Activated B cell treated with CpG ODN at 0.5 μM for 24 hours (primary cell): ENCODE measurements at regions of chrX and their contacts with region 1.

Region 1: DNA sequence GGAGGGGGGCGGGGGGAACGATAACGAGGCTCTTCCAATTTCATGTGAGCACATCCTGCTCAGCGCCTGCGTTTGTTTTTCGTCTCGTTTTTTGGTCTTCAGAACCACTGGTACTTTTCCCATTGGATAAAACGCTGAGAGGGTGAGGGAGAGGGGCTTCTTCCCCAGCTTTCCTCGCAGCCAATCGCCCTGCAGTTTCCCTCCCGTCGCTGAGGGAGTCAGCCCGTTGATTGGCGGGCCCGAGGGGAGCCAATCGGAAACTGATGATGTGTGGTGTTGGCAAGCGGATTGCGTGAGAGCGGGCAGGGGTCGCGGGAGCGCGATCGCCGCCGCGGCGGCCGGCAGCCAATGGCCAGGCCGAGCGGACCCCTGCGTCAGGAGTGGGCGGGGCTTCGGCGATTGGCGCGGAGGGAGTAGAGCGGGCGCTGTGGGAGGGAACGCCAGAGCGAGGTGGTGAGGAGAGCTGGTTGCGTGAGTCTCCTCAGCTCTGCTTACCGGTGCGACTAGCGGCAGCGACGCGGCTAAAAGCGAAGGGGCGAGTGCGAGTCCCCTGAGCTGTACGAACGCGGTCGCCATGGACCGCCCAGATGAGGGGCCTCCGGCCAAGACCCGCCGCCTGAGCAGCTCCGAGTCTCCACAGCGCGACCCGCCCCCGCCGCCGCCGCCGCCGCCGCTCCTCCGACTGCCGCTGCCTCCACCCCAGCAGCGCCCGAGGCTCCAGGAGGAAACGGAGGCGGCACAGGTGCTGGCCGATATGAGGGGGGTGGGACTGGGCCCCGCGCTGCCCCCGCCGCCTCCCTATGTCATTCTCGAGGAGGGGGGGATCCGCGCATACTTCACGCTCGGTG is at the start of gene TSPYL2:
- DNase-seq: peak; percentile 85
- ATAC-seq: peak; percentile 92
- H3K4me3 Mint-ChIP-seq: peak within 1 kb of the TSS; percentile 91
- H3K27ac Mint-ChIP-seq: peak within 1 kb of the TSS; percentile 98
- H3K4me1 Mint-ChIP-seq: peaks cover 27% of the 10 kb centered on the region
- H3K27me3 Mint-ChIP-seq: no peaks in the 10 kb centered on the region
- CTCF ChIP-seq: no peak
- total RNA-seq, gene TSPYL2: 48.2 and 49.7 TPM in 2 replicates

Region 2: GRCh38 chrX:52995135-52996020 is 86.8 kb before region 1 on chrX:
- CTCF ChIA-PET with region 1: no interaction called
- POLR2A ChIA-PET with region 1: interaction called, 21 read pairs
- intact Hi-C with region 1: loop called (anchors 1 kb)
- DNase-seq: peak; percentile 74
- ATAC-seq: peak; percentile 97
- H3K4me3 Mint-ChIP-seq: peak overlapping the region; percentile 97
- H3K27ac Mint-ChIP-seq: peak overlapping the region; percentile 99
- H3K4me1 Mint-ChIP-seq: peaks cover 16% of the 10 kb centered on the region
- H3K27me3 Mint-ChIP-seq: no peaks in the 10 kb centered on the region
- CTCF ChIP-seq: no peak

Region 3: GRCh38 chrX:53093748-53094583 is 11.8 kb after region 1 on chrX and contains the start of gene KANTR:
- CTCF ChIA-PET with region 1: no interaction called
- POLR2A ChIA-PET with region 1: interaction called, 10 read pairs
- intact Hi-C with region 1: loop called (anchors 1 kb)
- DNase-seq: peak; percentile 67
- ATAC-seq: peak; percentile 79
- H3K4me3 Mint-ChIP-seq: peak within 1 kb of the TSS; percentile 88
- H3K27ac Mint-ChIP-seq: peak within 1 kb of the TSS; percentile 85
- H3K4me1 Mint-ChIP-seq: peaks cover 20% of the 10 kb centered on the region
- H3K27me3 Mint-ChIP-seq: no peaks in the 10 kb centered on the region
- CTCF ChIP-seq: no peak
- total RNA-seq, gene KANTR: 11.2 and 12.0 TPM in 2 replicates

Region 4: GRCh38 chrX:53133400-53133799 is 51.3 kb after region 1 on chrX:
- CTCF ChIA-PET with region 1: no interaction called
- POLR2A ChIA-PET with region 1: no interaction called
- intact Hi-C with region 1: no loop called
- DNase-seq: no peak
- ATAC-seq: no peak
- H3K4me3 Mint-ChIP-seq: no peak overlapping the region
- H3K27ac Mint-ChIP-seq: no peak overlapping the region
- H3K4me1 Mint-ChIP-seq: no peaks in the 10 kb centered on the region
- H3K27me3 Mint-ChIP-seq: no peaks in the 10 kb centered on the region
- CTCF ChIP-seq: no peak

Region 5: GRCh38 chrX:53422086-53422860 is 340.1 kb after region 1 on chrX and contains the start of gene SMC1A:
- CTCF ChIA-PET with region 1: no interaction called
- POLR2A ChIA-PET with region 1: interaction called, 9 read pairs
- intact Hi-C with region 1: loop called (anchors 5 kb)
- DNase-seq: peak; percentile 79
- ATAC-seq: peak; percentile 89
- H3K4me3 Mint-ChIP-seq: peak within 1 kb of the TSS; percentile 92
- H3K27ac Mint-ChIP-seq: peak within 1 kb of the TSS; percentile 96
- H3K4me1 Mint-ChIP-seq: peaks cover 29% of the 10 kb centered on the region
- H3K27me3 Mint-ChIP-seq: no peaks in the 10 kb centered on the region
- CTCF ChIP-seq: no peak
- total RNA-seq, gene SMC1A: 75.8 and 84.0 TPM in 2 replicates

Region 6: GRCh38 chrX:54808605-54809483 is 1726.7 kb after region 1 on chrX:
- CTCF ChIA-PET with region 1: no interaction called
- POLR2A ChIA-PET with region 1: no interaction called
- intact Hi-C with region 1: loop called (anchors 5 kb)
- DNase-seq: peak; percentile 73
- ATAC-seq: peak; percentile 96
- H3K4me3 Mint-ChIP-seq: peak overlapping the region; percentile 92
- H3K27ac Mint-ChIP-seq: peak overlapping the region; percentile 91
- H3K4me1 Mint-ChIP-seq: peaks cover 14% of the 10 kb centered on the region
- H3K27me3 Mint-ChIP-seq: no peaks in the 10 kb centered on the region
- CTCF ChIP-seq: no peak